ENCODE measurements at regions of chr11 and their contacts with region 1.

Region 1: DNA sequence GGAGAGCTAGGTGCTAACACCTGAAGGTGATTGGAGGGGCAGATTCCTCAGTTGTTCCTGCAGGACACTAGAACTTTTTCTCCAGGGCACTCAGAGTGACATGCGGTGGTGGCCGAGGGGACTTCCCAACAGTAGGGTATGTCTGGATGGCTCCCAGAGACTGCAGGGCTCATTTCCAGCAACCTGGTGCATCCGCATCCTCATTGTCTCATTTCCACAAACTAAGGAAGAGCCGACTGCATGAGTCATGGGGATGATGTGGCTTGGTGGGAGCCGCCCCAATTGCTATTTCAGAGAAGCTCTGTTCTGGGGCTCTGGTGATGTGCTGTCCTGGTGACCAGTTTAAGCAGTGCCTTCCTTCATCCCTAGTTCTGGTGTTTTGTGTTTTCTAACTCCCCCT is 2.8 kb upstream of the ROBO4 start:
- DNase-seq: peak; percentile 42 to 51
- H3K4me3 ChIP-seq: no peak overlapping the region
- H3K27ac ChIP-seq: peak overlapping the region; percentile 41
- H3K4me1 ChIP-seq: peaks cover 34% of the 10 kb centered on the region
- H3K27me3 ChIP-seq: no peaks in the 10 kb centered on the region
- CTCF ChIP-seq: no peak

Region 2: DNA sequence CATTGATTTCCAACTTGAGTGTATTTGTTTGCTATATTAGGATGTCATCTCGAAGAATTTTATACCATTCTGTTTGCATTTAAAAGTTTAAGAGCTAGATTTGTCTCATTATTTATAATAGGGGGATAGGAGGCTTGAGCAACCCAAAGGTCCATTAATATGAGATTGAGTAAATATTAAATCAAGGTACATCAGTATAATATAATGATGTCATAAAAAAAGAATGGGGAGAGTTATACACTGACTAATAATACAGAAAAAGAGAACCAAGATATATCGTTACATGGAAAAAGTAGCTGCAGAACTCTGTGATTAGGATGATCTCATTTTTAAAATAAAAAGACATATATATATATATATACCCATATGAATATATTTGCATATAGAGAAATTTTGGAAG is 207.3 kb before region 1 on chr11:
- CTCF ChIA-PET with region 1: no interaction called
- POLR2A ChIA-PET with region 1: no interaction called
- intact Hi-C with region 1: no loop called
- DNase-seq: no peak
- H3K4me3 ChIP-seq: no peak overlapping the region
- H3K27ac ChIP-seq: no peak overlapping the region
- H3K4me1 ChIP-seq: no peaks in the 10 kb centered on the region
- H3K27me3 ChIP-seq: no peaks in the 10 kb centered on the region
- CTCF ChIP-seq: no peak

Region 3: GRCh38 chr11:124961972-124962609 is 61.6 kb after region 1 on chr11:
- CTCF ChIA-PET with region 1: no interaction called
- POLR2A ChIA-PET with region 1: no interaction called
- intact Hi-C with region 1: no loop called
- DNase-seq: peak; percentile 3 to 77
- H3K4me3 ChIP-seq: no peak overlapping the region
- H3K27ac ChIP-seq: no peak overlapping the region
- H3K4me1 ChIP-seq: no peaks in the 10 kb centered on the region
- H3K27me3 ChIP-seq: no peaks in the 10 kb centered on the region
- CTCF ChIP-seq: peak; percentile 85

Region 4: DNA sequence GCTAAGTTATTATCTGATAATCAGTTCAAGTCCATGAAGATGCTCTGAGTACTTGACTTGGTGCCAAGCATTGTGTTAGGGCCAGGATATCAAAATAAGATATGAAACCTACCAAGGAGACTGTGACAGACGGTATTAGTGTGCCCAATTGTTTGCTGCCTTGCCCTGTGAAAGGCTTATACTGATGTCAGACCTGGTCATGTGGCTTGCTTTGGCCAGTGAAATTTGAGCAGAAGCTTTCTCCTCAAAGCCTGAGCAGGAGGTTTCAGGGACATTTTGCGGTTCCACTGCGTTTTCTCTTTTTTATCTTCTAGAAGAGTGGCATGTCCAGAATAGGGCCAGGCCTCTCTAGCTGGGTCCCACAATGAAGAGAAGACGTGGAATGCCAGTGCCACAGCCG is 248.3 kb after region 1 on chr11:
- CTCF ChIA-PET with region 1: no interaction called
- POLR2A ChIA-PET with region 1: interaction called, 15 read pairs
- intact Hi-C with region 1: no loop called
- DNase-seq: no peak
- H3K4me3 ChIP-seq: no peak overlapping the region
- H3K27ac ChIP-seq: no peak overlapping the region
- H3K4me1 ChIP-seq: no peaks in the 10 kb centered on the region
- H3K27me3 ChIP-seq: peaks cover 5% of the 10 kb centered on the region; the same call in 1 of the 2 replicates
- CTCF ChIP-seq: no peak

Measured in PC-9 (cell line).